Activated naive CD4-positive, alpha-beta T cell treated with anti-CD3 and anti-CD28 coated beads for 36 hours (primary cell): ENCODE measurements at regions of chrX and their contacts with region 1.

Region 1: GRCh38 chrX:41116948-41117347 is 31.7 kb downstream of the USP9X start:
- DNase-seq: peak; percentile 20
- H3K4me3 Mint-ChIP-seq: peak overlapping the region; percentile 18
- H3K27ac Mint-ChIP-seq: peak overlapping the region; percentile 70
- H3K4me1 Mint-ChIP-seq: peaks cover 72% of the 10 kb centered on the region
- H3K27me3 Mint-ChIP-seq: no peaks in the 10 kb centered on the region

Region 2: GRCh38 chrX:40539214-40540142 is 577.5 kb before region 1 on chrX:
- CTCF ChIA-PET with region 1: no interaction called
- intact Hi-C with region 1: loop called (anchors 5 kb)
- DNase-seq: peak; percentile 84
- H3K4me3 Mint-ChIP-seq: peak overlapping the region; percentile 32
- H3K27ac Mint-ChIP-seq: no peak overlapping the region
- H3K4me1 Mint-ChIP-seq: peaks cover 20% of the 10 kb centered on the region
- H3K27me3 Mint-ChIP-seq: peaks cover 3% of the 10 kb centered on the region

Region 3: GRCh38 chrX:40647307-40648197 is 469.4 kb before region 1 on chrX and contains the start of gene CXorf38:
- CTCF ChIA-PET with region 1: interaction called, 7 read pairs
- intact Hi-C with region 1: loop called (anchors 1 kb)
- DNase-seq: peak; percentile 94
- H3K4me3 Mint-ChIP-seq: peak within 1 kb of the TSS; percentile 84
- H3K27ac Mint-ChIP-seq: peak within 1 kb of the TSS; percentile 91
- H3K4me1 Mint-ChIP-seq: peaks cover 25% of the 10 kb centered on the region
- H3K27me3 Mint-ChIP-seq: no peaks in the 10 kb centered on the region
- total RNA-seq, gene CXorf38: 23.2 to 23.3 TPM

Region 4: GRCh38 chrX:40792433-40792832 is 324.5 kb before region 1 on chrX:
- CTCF ChIA-PET with region 1: interaction called, 4 read pairs
- intact Hi-C with region 1: loop called (anchors 10 kb)
- DNase-seq: no peak
- H3K4me3 Mint-ChIP-seq: no peak overlapping the region
- H3K27ac Mint-ChIP-seq: no peak overlapping the region
- H3K4me1 Mint-ChIP-seq: peaks cover 1% of the 10 kb centered on the region
- H3K27me3 Mint-ChIP-seq: no peaks in the 10 kb centered on the region

Region 5: DNA sequence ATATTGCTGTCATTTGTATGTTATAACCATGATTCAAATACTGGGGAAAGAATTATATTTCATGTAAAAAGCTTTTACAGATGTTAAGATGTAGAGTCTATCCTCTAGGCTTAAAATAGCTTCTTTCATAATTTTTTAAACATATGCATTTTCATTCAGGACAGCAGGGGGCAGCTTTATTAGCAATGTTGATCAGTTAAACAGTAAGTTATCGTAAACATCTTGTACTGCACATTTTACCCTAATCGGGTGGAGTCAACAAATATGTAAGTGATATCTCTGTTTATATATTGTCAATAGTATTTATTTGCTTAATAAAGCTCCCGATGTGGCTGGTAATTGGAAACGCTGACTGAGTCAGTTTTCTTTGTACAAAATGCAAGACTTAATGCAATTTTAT is 239.1 kb before region 1 on chrX:
- CTCF ChIA-PET with region 1: interaction called, 15 read pairs
- intact Hi-C with region 1: loop called (anchors 2 kb)
- DNase-seq: no peak
- H3K4me3 Mint-ChIP-seq: no peak overlapping the region
- H3K27ac Mint-ChIP-seq: no peak overlapping the region
- H3K4me1 Mint-ChIP-seq: peaks cover 4% of the 10 kb centered on the region
- H3K27me3 Mint-ChIP-seq: no peaks in the 10 kb centered on the region

Region 6: DNA sequence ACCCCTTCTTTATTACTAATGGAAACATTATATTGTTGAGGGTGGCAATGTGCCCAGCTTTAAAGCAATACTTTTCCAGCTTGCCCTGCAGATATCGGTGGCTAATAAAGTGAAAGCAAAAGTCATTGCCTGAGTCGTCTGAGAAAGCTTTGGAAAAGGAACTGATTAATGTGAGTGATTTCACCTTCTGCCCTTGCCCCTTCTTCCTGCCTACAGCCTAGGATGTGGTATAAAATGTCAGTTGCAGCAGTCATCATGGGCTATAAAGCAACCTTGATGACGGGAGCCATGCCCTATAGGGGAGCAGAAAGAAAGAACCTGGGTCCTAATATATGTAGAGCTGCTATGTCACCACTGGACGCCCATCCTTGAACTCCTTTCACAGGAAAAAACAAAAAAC is 164.1 kb before region 1 on chrX:
- CTCF ChIA-PET with region 1: no interaction called
- intact Hi-C with region 1: loop called (anchors 5 kb)
- DNase-seq: peak; percentile 33
- H3K4me3 Mint-ChIP-seq: peak overlapping the region; percentile 29
- H3K27ac Mint-ChIP-seq: no peak overlapping the region
- H3K4me1 Mint-ChIP-seq: peaks cover 11% of the 10 kb centered on the region
- H3K27me3 Mint-ChIP-seq: no peaks in the 10 kb centered on the region

Region 7: GRCh38 chrX:41084044-41084892 is 32.7 kb before region 1 on chrX:
- CTCF ChIA-PET with region 1: interaction called, 4 read pairs
- intact Hi-C with region 1: loop called (anchors 2 kb)
- DNase-seq: peak; percentile 96
- H3K4me3 Mint-ChIP-seq: peak overlapping the region; percentile 89
- H3K27ac Mint-ChIP-seq: peak overlapping the region; percentile 100
- H3K4me1 Mint-ChIP-seq: peaks cover 22% of the 10 kb centered on the region
- H3K27me3 Mint-ChIP-seq: no peaks in the 10 kb centered on the region

Region 8: GRCh38 chrX:41131766-41132165 is 14.8 kb after region 1 on chrX:
- CTCF ChIA-PET with region 1: no interaction called
- intact Hi-C with region 1: no loop called
- DNase-seq: no peak
- H3K4me3 Mint-ChIP-seq: no peak overlapping the region
- H3K27ac Mint-ChIP-seq: no peak overlapping the region
- H3K4me1 Mint-ChIP-seq: peaks cover 13% of the 10 kb centered on the region
- H3K27me3 Mint-ChIP-seq: no peaks in the 10 kb centered on the region

Region 9: GRCh38 chrX:41481264-41482109 is 364.5 kb after region 1 on chrX:
- CTCF ChIA-PET with region 1: no interaction called
- intact Hi-C with region 1: no loop called
- DNase-seq: peak; percentile 12
- H3K4me3 Mint-ChIP-seq: no peak overlapping the region
- H3K27ac Mint-ChIP-seq: no peak overlapping the region
- H3K4me1 Mint-ChIP-seq: no peaks in the 10 kb centered on the region
- H3K27me3 Mint-ChIP-seq: no peaks in the 10 kb centered on the region

Region 10: DNA sequence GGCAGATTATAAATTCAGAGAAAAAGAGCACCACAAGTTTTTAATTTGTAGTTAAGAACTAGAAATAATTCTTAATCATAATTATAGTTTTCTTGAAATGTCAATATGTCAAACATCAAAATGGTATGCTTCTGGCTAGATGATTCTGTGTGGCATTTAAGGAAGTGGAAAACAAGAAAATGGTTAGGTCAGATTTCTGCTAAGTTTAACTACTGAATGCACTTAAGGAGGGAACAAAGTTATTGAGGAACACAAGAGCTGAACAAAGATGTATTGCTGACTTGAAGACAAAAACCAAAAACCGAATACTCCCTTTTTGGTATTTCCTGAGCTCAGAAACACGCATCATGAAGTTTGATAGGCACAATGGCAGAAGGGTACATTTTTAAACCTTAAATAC is 513.1 kb after region 1 on chrX:
- CTCF ChIA-PET with region 1: no interaction called
- intact Hi-C with region 1: no loop called
- DNase-seq: no peak
- H3K4me3 Mint-ChIP-seq: no peak overlapping the region
- H3K27ac Mint-ChIP-seq: no peak overlapping the region
- H3K4me1 Mint-ChIP-seq: no peaks in the 10 kb centered on the region
- H3K27me3 Mint-ChIP-seq: no peaks in the 10 kb centered on the region